ENCODE measurements at regions of chr13 and their contacts with region 1.

Region 1: DNA sequence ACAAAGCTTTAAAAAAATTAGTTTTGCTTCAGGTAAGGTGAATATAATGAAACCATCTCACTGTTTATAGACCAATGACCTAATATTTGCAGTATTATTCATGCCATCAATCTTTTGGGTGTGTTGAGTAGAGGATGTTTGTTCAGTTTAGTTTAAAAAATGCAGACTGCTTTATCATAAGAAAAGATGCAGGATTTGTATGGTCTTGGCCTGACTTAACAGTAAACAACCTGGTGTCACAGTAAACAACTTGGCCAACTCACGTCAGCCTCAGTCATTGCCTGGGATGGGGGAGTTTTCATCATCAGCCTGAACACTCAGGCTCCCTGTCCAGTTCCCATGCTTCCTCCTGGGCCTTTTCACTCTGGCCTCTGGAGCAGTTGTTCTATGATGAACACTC is 55.1 kb downstream of the LMO7 start:
- DNase-seq: no peak
- H3K4me3 ChIP-seq: no peak overlapping the region
- H3K27ac ChIP-seq: no peak overlapping the region
- H3K4me1 ChIP-seq: peaks cover 0 to 3% of the 10 kb centered on the region in 2 donors
- H3K27me3 ChIP-seq: no peaks in the 10 kb centered on the region
- CTCF ChIP-seq: no peak

Region 2: DNA sequence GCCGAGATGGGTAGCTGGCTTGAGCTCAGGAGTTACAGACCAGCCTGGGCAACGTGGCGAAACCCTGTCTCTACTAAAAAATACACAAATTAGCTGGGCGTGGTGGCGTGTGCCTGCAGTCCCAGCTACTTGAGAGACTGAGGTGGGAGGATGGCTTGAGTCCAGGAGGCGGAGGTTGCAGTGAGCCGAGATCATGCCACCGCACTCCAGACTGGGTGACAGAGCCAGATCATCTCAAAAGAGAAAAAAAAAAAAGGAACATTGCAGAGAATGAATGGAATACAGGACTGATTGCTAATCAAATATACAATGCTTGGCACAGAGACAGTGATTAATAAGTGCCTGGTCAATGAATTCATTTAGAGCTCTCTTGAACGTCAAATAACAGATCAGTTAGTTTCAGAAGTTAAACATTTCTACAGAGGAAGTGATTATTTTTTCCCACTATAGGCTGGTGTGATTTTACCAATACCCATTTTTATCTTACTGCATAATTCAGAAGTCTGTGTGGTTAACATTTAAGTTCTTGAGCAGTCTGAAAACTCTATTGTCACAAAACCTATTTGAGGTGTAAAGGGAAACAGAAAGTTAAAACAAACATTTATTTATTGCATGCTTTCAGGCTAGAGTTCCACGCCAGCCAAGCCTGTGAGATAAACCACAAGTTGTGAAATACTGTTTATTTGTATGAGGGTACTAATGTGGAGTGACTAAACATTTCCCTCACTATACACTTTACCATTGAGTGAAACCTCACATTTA is 201.5 kb before region 1 on chr13:
- intact Hi-C with region 1: no loop called
- DNase-seq: no peak
- H3K4me3 ChIP-seq: no peak overlapping the region
- H3K27ac ChIP-seq: no peak overlapping the region
- H3K4me1 ChIP-seq: no peaks in the 10 kb centered on the region
- H3K27me3 ChIP-seq: no peaks in the 10 kb centered on the region
- CTCF ChIP-seq: no peak

Region 3: GRCh38 chr13:75760131-75761021 is 69.2 kb after region 1 on chr13:
- intact Hi-C with region 1: loop called (anchors 5 kb)
- DNase-seq: no peak
- H3K4me3 ChIP-seq: peak overlapping the region; percentile 47 to 60
- H3K27ac ChIP-seq: peak overlapping the region; percentile 77 to 80
- H3K4me1 ChIP-seq: peaks cover 0 to 25% of the 10 kb centered on the region in 2 donors
- H3K27me3 ChIP-seq: no peaks in the 10 kb centered on the region
- CTCF ChIP-seq: no peak

Region 4: DNA sequence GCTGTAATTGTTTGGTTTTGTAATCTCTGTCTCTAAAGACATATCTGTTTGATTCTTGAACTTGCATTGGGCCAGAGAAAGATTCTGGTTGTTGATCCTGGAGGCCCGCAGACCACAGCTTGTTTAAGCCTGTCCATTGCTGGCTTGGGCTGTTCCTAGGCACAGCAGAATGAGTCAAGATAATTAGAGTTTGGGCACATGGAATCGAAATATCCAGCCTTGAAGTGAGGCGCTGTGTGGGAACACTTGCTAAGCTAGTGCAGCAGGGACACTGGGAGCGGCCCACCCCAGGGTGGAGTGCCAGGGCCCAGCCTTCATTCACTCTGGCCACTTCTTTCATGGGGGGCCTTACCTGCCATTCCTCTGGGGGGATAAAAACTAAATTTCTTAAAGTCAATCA is 164.7 kb after region 1 on chr13:
- intact Hi-C with region 1: loop called (anchors 5 kb)
- DNase-seq: no peak
- H3K4me3 ChIP-seq: no peak overlapping the region
- H3K27ac ChIP-seq: no peak overlapping the region
- H3K4me1 ChIP-seq: no peaks in the 10 kb centered on the region
- H3K27me3 ChIP-seq: no peaks in the 10 kb centered on the region
- CTCF ChIP-seq: no peak

Region 5: DNA sequence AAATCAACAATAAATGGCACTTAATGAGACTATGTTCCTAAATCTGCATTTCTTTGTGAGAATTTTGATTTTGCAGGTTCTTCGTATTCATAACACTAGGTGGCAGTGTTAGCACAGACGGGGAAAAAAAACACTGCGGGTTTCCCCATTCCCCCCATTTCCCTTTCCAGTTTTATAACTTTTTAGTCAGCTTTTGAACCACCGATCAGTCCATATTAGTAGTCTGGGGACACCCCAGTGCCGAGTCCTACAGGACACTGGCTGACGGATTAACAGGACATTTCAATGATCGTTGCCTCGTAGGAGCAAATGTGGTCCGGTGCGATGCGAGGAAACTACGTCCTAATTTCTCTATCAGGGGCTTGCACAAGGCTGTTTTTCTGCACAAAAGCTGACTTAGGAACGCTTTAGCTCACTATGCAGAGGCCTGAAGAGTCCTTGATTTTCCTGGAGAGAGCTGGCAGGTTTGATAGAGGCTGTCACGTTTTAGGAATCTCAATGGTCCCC is 179.3 kb after region 1 on chr13:
- intact Hi-C with region 1: loop called (anchors 5 kb)
- DNase-seq: no peak
- H3K4me3 ChIP-seq: peak overlapping the region; percentile 39 to 66
- H3K27ac ChIP-seq: peak overlapping the region in 1 of 2 donors; percentile 14
- H3K4me1 ChIP-seq: peaks cover 0 to 3% of the 10 kb centered on the region in 2 donors
- H3K27me3 ChIP-seq: no peaks in the 10 kb centered on the region
- CTCF ChIP-seq: peak; percentile 51 to 84 (median 77)

Region 6: DNA sequence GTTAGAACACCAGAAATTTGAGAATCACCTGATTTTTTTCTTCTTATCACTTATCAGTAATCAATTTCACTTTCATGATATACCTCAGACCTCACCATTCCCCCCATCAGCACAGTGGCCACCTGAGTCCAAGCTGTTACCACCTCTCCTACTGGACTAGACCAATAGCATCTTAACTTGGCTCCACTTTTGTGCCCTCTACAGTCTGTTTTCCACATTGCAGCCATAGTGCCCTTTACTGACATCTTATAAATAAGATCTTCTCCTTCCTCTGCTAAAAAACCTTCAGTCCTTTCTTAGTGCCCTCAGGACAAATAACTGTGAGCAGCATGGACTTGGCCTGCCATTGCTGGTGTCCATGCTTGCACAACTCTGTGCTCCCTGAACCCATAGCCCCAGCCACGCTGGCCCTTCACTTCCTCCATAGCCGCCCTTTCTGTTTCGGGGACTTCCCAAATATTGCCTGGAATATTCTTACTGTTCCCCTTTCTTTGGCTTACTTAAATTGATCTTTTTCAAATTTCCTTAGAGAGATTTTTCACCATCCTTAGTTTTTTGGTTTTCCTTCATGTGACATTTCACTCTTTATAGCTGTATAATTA is 325.7 kb after region 1 on chr13:
- intact Hi-C with region 1: loop called (anchors 10 kb)
- DNase-seq: no peak
- H3K4me3 ChIP-seq: no peak overlapping the region
- H3K27ac ChIP-seq: no peak overlapping the region
- H3K4me1 ChIP-seq: peaks cover 0 to 14% of the 10 kb centered on the region in 2 donors
- H3K27me3 ChIP-seq: no peaks in the 10 kb centered on the region
- CTCF ChIP-seq: peak in 1 of 3 experiments; percentile 21

Region 7: DNA sequence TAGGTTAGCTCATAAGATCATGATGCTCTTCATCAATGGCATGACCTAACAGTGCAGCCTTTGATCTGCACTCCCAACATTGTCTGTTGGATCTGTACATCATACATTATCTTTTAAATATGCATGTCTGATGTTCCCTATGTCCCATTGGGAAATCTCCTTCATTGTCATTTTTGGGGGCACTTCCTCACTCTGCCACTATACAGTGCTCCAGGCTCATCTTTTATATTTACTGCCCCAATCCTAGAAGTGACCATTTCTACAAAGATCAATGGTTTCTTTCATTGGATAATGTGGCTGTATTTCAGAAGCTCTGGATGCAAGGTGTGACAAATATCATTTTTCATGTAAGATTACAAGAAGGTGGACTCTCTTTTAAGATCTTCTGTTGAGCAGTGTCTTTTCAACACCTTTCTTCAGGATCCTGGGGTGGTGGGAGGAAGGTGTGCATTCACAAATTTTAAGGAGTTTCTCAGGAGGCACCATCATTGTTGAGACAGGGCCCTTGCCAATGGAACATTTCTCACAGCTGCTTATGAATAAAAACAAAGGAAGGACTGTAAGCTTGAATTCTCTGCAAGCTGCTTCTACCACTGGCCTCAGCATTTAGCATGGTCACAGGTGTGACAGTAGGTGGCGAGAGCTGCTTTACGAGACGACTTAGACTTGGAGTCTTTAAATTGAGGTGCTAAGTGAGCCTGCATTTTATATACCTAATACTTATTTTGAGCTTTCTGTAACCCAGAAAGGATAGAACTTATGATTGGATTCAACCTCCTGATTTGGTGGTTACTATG is 347.9 kb after region 1 on chr13:
- intact Hi-C with region 1: no loop called
- DNase-seq: no peak
- H3K4me3 ChIP-seq: no peak overlapping the region
- H3K27ac ChIP-seq: no peak overlapping the region
- H3K4me1 ChIP-seq: no peaks in the 10 kb centered on the region
- H3K27me3 ChIP-seq: no peaks in the 10 kb centered on the region
- CTCF ChIP-seq: no peak

Region 8: GRCh38 chr13:76473552-76474134 is 782.5 kb after region 1 on chr13:
- intact Hi-C with region 1: loop called (anchors 5 kb)
- DNase-seq: peak in 1 of 2 donors; percentile 87
- H3K4me3 ChIP-seq: no peak overlapping the region
- H3K27ac ChIP-seq: no peak overlapping the region
- H3K4me1 ChIP-seq: no peaks in the 10 kb centered on the region
- H3K27me3 ChIP-seq: no peaks in the 10 kb centered on the region
- CTCF ChIP-seq: peak; percentile 69 to 78 (median 77)

Region 9: GRCh38 chr13:76903544-76904162 is 1212.5 kb after region 1 on chr13:
- intact Hi-C with region 1: loop called (anchors 10 kb)
- DNase-seq: peak in 1 of 2 donors; percentile 85
- H3K4me3 ChIP-seq: no peak overlapping the region
- H3K27ac ChIP-seq: no peak overlapping the region
- H3K4me1 ChIP-seq: no peaks in the 10 kb centered on the region
- H3K27me3 ChIP-seq: no peaks in the 10 kb centered on the region
- CTCF ChIP-seq: peak; percentile 87 to 99 (median 96)

Measured in ascending aorta (tissue), 2 donors.